Common myeloid progenitor, CD34-positive (primary cell): ENCODE measurements at regions of chr5 and their contacts with region 1.

Region 1: GRCh38 chr5:170267431-170268152 is 30.0 kb downstream of the LCP2 start:
- DNase-seq: peak; percentile 80 to 90 (median 90)
- H3K4me3 ChIP-seq: no peak overlapping the region
- H3K27ac ChIP-seq: peak overlapping the region; percentile 4 to 49
- H3K4me1 ChIP-seq: peaks cover 17 to 63% (median 39%) of the 10 kb centered on the region in 4 experiments
- H3K27me3 ChIP-seq: no peaks in the 10 kb centered on the region

Region 2: GRCh38 chr5:170159101-170159698 is 108.4 kb before region 1 on chr5:
- CTCF ChIA-PET with region 1: no interaction called
- POLR2A ChIA-PET with region 1: no interaction called
- DNase-seq: no peak
- H3K4me3 ChIP-seq: no peak overlapping the region
- H3K27ac ChIP-seq: no peak overlapping the region
- H3K4me1 ChIP-seq: no peaks in the 10 kb centered on the region
- H3K27me3 ChIP-seq: no peaks in the 10 kb centered on the region

Region 3: DNA sequence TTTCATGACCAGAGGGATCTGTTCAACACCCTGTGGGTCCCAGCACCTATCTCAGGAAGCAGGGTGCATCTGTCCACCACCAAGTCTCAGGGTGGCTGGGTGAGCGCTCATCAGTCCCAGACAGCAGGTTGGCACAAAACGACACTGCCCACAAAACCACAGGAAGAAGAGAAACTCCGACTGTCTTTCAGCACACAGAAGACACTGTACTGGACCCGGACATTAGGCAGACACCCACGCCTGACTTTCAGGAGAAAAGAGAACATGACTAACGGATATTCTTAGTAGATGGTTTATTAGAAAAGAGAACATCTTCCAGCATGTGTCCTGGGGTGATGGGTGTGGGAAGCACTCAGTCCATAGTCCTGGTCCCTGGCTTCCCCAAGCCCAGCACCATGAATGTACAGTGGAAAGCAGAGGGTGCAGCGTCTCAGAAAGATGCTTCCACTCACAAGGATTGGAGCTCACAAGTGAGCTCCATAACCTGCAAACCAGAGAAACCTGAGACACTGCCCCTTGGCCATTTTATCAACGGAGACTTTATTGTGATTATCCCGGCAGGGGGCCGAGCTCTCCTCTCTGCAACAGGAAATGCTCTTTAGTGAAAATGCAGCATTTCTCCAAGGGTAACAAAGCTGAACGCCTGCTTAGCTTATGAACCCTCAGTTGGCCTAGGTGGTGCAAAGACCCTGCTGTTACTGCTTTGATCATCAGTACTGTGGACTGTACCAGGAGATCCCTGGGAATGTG is 65.7 kb after region 1 on chr5:
- CTCF ChIA-PET with region 1: interaction called, 65 read pairs
- POLR2A ChIA-PET with region 1: interaction called, 6 read pairs
- DNase-seq: peak; percentile 50 to 89 (median 83)
- H3K4me3 ChIP-seq: peak overlapping the region in 2 of 7 experiments; percentile 10 to 46
- H3K27ac ChIP-seq: peak overlapping the region in 1 of 2 experiments; percentile 49
- H3K4me1 ChIP-seq: peaks cover 32 to 90% (median 71%) of the 10 kb centered on the region in 4 experiments
- H3K27me3 ChIP-seq: no peaks in the 10 kb centered on the region

Region 4: DNA sequence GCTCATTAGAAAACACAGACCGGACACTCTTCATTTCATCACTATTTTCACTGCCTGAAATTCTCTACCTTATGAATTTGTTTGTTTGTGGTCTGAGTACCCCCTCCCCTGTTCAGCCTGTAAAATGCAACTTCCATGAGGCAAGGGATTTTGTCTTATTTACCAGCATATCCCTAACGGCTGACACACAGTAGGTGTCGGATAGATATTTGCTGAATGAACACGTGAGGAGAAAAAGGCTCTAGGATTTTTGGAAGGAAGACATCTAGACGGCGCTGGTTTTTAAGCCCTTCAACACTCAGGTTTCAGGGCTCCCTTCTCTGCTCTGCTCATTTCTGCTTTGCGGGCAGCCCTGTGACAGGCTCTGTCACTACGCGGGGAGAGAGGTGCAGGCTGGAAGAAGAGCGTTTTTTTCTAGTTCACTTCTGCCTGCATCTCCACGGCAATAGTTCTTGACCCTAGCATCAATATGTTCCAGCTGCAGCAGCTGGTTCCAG is 80.6 kb after region 1 on chr5:
- CTCF ChIA-PET with region 1: interaction called, 75 read pairs
- POLR2A ChIA-PET with region 1: no interaction called
- DNase-seq: peak; percentile 39 to 54 (median 54)
- H3K4me3 ChIP-seq: no peak overlapping the region
- H3K27ac ChIP-seq: no peak overlapping the region
- H3K4me1 ChIP-seq: peaks cover 0 to 17% (median 9%) of the 10 kb centered on the region in 4 experiments
- H3K27me3 ChIP-seq: no peaks in the 10 kb centered on the region

Region 5: GRCh38 chr5:170420780-170421412 is 153.3 kb after region 1 on chr5:
- CTCF ChIA-PET with region 1: interaction called, 63 read pairs
- POLR2A ChIA-PET with region 1: no interaction called
- DNase-seq: peak; percentile 79 to 84 (median 80)
- H3K4me3 ChIP-seq: no peak overlapping the region
- H3K27ac ChIP-seq: no peak overlapping the region
- H3K4me1 ChIP-seq: peaks cover 0 to 29% (median 16%) of the 10 kb centered on the region in 4 experiments
- H3K27me3 ChIP-seq: no peaks in the 10 kb centered on the region